ENCODE measurements at regions of chr2 and their contacts with region 1.

Region 1: DNA sequence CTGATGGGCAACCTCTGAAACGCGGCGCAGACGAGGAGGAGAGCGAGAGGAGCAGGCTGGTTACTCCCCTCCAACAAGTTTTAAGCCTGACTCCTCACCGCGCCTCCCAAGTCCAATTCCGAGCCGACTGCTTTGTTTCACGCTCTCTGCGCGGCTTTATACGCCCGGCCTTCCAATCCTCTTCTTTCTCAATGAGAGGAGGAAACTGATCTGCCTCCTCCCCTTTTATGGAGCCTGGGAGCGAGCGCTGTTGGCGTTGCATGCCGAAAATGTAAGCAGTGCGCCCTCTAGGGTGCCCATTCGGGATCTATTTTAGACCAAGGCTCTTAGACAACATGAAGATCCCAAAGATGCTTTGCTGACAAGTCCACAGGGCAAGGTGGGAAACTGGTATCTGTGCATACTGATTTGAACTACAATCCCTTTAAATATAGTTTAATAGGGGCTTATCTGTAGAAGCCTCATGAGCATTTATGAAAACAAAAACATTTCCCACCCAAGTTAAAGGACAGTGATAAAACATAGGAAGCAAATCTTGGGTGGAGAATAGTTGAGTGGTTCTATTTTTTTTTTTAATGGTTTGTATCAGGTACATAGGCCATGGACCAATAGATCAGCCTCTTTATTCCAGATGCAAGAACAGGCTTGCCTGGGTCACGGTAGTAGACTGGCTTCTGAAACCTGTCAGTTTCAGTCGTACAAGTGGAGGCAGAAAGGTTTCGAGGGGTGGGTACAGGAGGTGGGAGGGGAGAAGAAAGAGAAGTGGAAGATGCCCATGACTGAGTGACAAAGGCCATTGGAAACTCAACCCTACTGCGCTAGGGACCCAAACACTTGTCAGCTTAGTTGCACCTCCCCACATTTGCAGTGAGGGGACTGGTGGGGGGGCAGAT is at the start of gene RND3:
- DNase-seq: no peak
- ATAC-seq: peak; percentile 60
- H3K4me3 ChIP-seq: no peak within 1 kb of the TSS
- H3K27ac ChIP-seq: no peak within 1 kb of the TSS
- H3K4me1 ChIP-seq: no peaks in the 10 kb centered on the region
- H3K27me3 ChIP-seq: peaks cover 0 to 12% of the 10 kb centered on the region in 2 experiments
- CTCF ChIP-seq: peak; percentile 66 to 76 (median 73)
- EP300 ChIP-seq: no peak
- POLR2A ChIP-seq: no peak
- RAD21 ChIP-seq: peak; percentile 75
- polyA plus RNA-seq, gene RND3: 1.0 to 1.3 TPM

Region 2: GRCh38 chr2:149597668-149598326 is 890.0 kb before region 1 on chr2:
- CTCF ChIA-PET with region 1: no interaction called
- POLR2A ChIA-PET with region 1: no interaction called
- RAD21 ChIA-PET with region 1: no interaction called
- SMC1A ChIA-PET with region 1: interaction called, 3 read pairs
- in situ Hi-C with region 1: loop called (anchors 5 kb)
- intact Hi-C with region 1: loop called (anchors 1 kb)
- DNase-seq: peak; percentile 57
- ATAC-seq: peak; percentile 96
- H3K4me3 ChIP-seq: no peak overlapping the region
- H3K27ac ChIP-seq: no peak overlapping the region
- H3K4me1 ChIP-seq: 0 out of 2 replicates have a peak, but pooled peaks cover 4% of the 10 kb centered on the region
- H3K27me3 ChIP-seq: no peaks in the 10 kb centered on the region
- CTCF ChIP-seq: peak; percentile 79 to 85 (median 85)
- EP300 ChIP-seq: no peak
- POLR2A ChIP-seq: no peak
- RAD21 ChIP-seq: peak; percentile 94

Region 3: DNA sequence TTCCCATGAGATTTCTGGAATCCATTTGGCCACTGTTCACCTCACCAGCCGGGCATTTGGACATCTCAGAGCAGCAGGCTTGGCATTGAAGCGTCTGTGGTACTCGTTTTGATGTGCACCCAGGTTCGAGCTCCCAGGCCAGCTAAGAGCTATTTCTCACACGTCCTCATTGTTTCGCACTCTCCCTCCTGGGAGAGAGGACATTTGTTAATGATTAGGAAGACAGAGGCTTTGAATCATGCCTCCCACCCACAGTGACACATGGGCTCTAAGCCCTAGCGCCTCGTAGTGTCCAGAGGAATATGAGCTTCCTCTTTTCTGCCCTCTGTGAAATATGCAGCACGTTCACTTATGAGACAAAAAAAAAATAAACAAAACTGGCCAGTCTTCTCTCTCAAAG is 362.1 kb before region 1 on chr2:
- CTCF ChIA-PET with region 1: no interaction called
- POLR2A ChIA-PET with region 1: interaction called, 3 read pairs
- RAD21 ChIA-PET with region 1: interaction called, 7 read pairs
- SMC1A ChIA-PET with region 1: no interaction called
- in situ Hi-C with region 1: no loop called
- intact Hi-C with region 1: loop called (anchors 5 kb)
- DNase-seq: no peak
- ATAC-seq: peak; percentile 49
- H3K4me3 ChIP-seq: no peak overlapping the region
- H3K27ac ChIP-seq: no peak overlapping the region
- H3K4me1 ChIP-seq: no peaks in the 10 kb centered on the region; the same call in 1 of the 2 replicates
- H3K27me3 ChIP-seq: 0 out of 4 replicates have a peak, but pooled peaks cover 0 to 1% of the 10 kb centered on the region in 2 experiments
- CTCF ChIP-seq: no peak
- EP300 ChIP-seq: no peak
- POLR2A ChIP-seq: no peak
- RAD21 ChIP-seq: no peak

Region 4: GRCh38 chr2:150466741-150467620 is 20.8 kb before region 1 on chr2:
- CTCF ChIA-PET with region 1: interaction called, 10 read pairs
- POLR2A ChIA-PET with region 1: interaction called, 45 read pairs
- RAD21 ChIA-PET with region 1: interaction called, 143 read pairs
- SMC1A ChIA-PET with region 1: interaction called, 66 read pairs
- in situ Hi-C with region 1: no loop called
- intact Hi-C with region 1: no loop called
- DNase-seq: no peak
- ATAC-seq: no peak
- H3K4me3 ChIP-seq: no peak overlapping the region
- H3K27ac ChIP-seq: no peak overlapping the region
- H3K4me1 ChIP-seq: no peaks in the 10 kb centered on the region
- H3K27me3 ChIP-seq: no peaks in the 10 kb centered on the region; a peak in 1 of 4 replicates
- CTCF ChIP-seq: no peak
- EP300 ChIP-seq: no peak
- POLR2A ChIP-seq: no peak
- RAD21 ChIP-seq: no peak

Region 5: GRCh38 chr2:150520887-150521664 is 33.3 kb after region 1 on chr2:
- CTCF ChIA-PET with region 1: interaction called, 5 read pairs
- POLR2A ChIA-PET with region 1: interaction called, 7 read pairs
- RAD21 ChIA-PET with region 1: interaction called, 12 read pairs
- SMC1A ChIA-PET with region 1: interaction called, 14 read pairs
- in situ Hi-C with region 1: no loop called
- intact Hi-C with region 1: no loop called
- DNase-seq: no peak
- ATAC-seq: peak; percentile 89
- H3K4me3 ChIP-seq: no peak overlapping the region
- H3K27ac ChIP-seq: no peak overlapping the region
- H3K4me1 ChIP-seq: no peaks in the 10 kb centered on the region
- H3K27me3 ChIP-seq: no peaks in the 10 kb centered on the region
- CTCF ChIP-seq: no peak
- EP300 ChIP-seq: no peak
- POLR2A ChIP-seq: no peak
- RAD21 ChIP-seq: no peak

Region 6: GRCh38 chr2:150570712-150571111 is 82.9 kb after region 1 on chr2:
- CTCF ChIA-PET with region 1: interaction called, 4 read pairs
- POLR2A ChIA-PET with region 1: no interaction called
- RAD21 ChIA-PET with region 1: interaction called, 6 read pairs
- SMC1A ChIA-PET with region 1: interaction called, 10 read pairs
- in situ Hi-C with region 1: no loop called
- intact Hi-C with region 1: no loop called
- DNase-seq: no peak
- ATAC-seq: no peak
- H3K4me3 ChIP-seq: no peak overlapping the region
- H3K27ac ChIP-seq: no peak overlapping the region
- H3K4me1 ChIP-seq: peaks cover 3% of the 10 kb centered on the region; the same call in 1 of the 2 replicates
- H3K27me3 ChIP-seq: no peaks in the 10 kb centered on the region
- CTCF ChIP-seq: no peak
- EP300 ChIP-seq: no peak
- POLR2A ChIP-seq: no peak
- RAD21 ChIP-seq: no peak

Region 7: GRCh38 chr2:150610671-150611279 is 123.0 kb after region 1 on chr2:
- CTCF ChIA-PET with region 1: interaction called, 5 read pairs
- POLR2A ChIA-PET with region 1: no interaction called
- RAD21 ChIA-PET with region 1: interaction called, 7 read pairs
- SMC1A ChIA-PET with region 1: interaction called, 4 read pairs
- in situ Hi-C with region 1: no loop called
- intact Hi-C with region 1: loop called (anchors 2 kb)
- DNase-seq: no peak
- ATAC-seq: peak; percentile 85
- H3K4me3 ChIP-seq: no peak overlapping the region
- H3K27ac ChIP-seq: no peak overlapping the region
- H3K4me1 ChIP-seq: no peaks in the 10 kb centered on the region
- H3K27me3 ChIP-seq: no peaks in the 10 kb centered on the region; a peak in 1 of 4 replicates
- CTCF ChIP-seq: peak; percentile 30 to 52 (median 46); a peak in 4 of 6 replicates
- EP300 ChIP-seq: no peak
- POLR2A ChIP-seq: no peak
- RAD21 ChIP-seq: peak; percentile 55